Mammary epithelial cell (primary cell): ENCODE measurements at regions of chr16 and their contacts with region 1.

Region 1: GRCh38 chr16:1871974-1872635 is at the start of gene MEIOB:
- DNase-seq: no peak
- H3K4me3 ChIP-seq: peak within 1 kb of the TSS in 1 of 3 experiments; percentile 16
- H3K27ac ChIP-seq: no peak within 1 kb of the TSS
- H3K4me1 ChIP-seq: peaks cover 8% of the 10 kb centered on the region
- H3K27me3 ChIP-seq: peaks cover 3% of the 10 kb centered on the region
- CTCF ChIP-seq: no peak
- total RNA-seq, gene MEIOB: 0.17 TPM in 1 of 2 donors, not detected in the other

Region 2: DNA sequence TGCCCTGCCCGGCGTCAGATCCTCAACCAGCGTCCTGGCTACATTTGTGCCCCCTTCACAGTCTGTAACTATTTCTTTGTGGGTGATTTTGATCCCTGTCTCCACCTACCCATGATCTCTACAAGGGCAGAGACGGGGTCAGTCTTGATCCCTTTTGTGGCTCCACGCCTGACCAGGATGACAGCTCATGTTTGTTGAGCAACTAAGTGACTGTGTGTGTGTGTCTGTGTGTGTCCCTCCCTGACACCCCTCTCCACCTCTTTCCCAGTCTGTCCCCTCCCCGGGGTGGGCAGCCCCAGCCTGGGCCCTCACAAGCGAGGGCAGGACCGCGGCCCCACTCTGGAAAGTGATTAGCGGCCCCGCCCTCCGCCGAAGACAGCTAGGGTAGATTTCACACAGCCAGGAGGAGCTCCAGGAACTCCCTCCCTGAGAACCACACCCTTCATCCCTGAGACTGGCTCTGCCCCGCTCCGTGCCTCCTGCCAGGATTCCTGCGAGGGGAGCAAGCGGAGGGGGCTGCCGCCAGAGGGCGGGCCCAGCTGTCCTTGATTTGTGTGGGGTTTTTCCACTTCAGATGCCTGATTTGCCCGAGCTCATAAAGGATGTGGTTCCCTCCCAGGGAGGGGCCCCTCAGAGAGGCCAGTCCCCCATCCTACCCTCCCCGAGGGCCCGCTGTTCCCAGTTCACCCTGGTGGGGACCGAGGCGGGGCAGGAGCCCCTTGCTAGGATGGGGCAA is 51.4 kb after region 1 on chr16:
- CTCF ChIA-PET with region 1: no interaction called
- dilution Hi-C with region 1: loop called (anchors 5 kb)
- in situ Hi-C with region 1: loop called in 1 of 2 experiments (anchors 5 kb)
- intact Hi-C with region 1: loop called (anchors 2 kb)
- DNase-seq: no peak
- H3K4me3 ChIP-seq: no peak overlapping the region
- H3K27ac ChIP-seq: no peak overlapping the region
- H3K4me1 ChIP-seq: no peaks in the 10 kb centered on the region
- H3K27me3 ChIP-seq: peaks cover 26% of the 10 kb centered on the region
- CTCF ChIP-seq: peak in 1 of 2 donors; percentile 7